HEK293 (cell line): ENCODE measurements at regions of chr6 and their contacts with region 1.

Region 1: GRCh38 chr6:70884074-70884983 is 72.5 kb downstream of the B3GAT2 start:
- H3K4me3 ChIP-seq: no peak overlapping the region
- H3K27ac ChIP-seq: no peak overlapping the region
- H3K4me1 ChIP-seq: no peaks in the 10 kb centered on the region
- CTCF ChIP-seq: peak; percentile 82

Region 2: GRCh38 chr6:70566751-70567382 is 317.5 kb before region 1 on chr6 and contains the start of gene SDHAF4:
- CTCF ChIA-PET with region 1: interaction called, 12 read pairs
- POLR2A ChIA-PET with region 1: no interaction called
- H3K4me3 ChIP-seq: peak within 1 kb of the TSS; percentile 73
- H3K27ac ChIP-seq: peak within 1 kb of the TSS; percentile 83
- H3K4me1 ChIP-seq: no peaks in the 10 kb centered on the region
- CTCF ChIP-seq: peak; percentile 74

Region 3: GRCh38 chr6:70706491-70707123 is 177.7 kb before region 1 on chr6:
- CTCF ChIA-PET with region 1: interaction called, 135 read pairs
- POLR2A ChIA-PET with region 1: no interaction called
- H3K4me3 ChIP-seq: no peak overlapping the region
- H3K27ac ChIP-seq: no peak overlapping the region
- H3K4me1 ChIP-seq: no peaks in the 10 kb centered on the region
- CTCF ChIP-seq: 0 out of 2 replicates have a peak, but pooled peaks have one; percentile 11

Region 4: GRCh38 chr6:70955441-70956190 is 71.3 kb after region 1 on chr6:
- CTCF ChIA-PET with region 1: interaction called, 33 read pairs
- POLR2A ChIA-PET with region 1: no interaction called
- H3K4me3 ChIP-seq: peak overlapping the region; percentile 57
- H3K27ac ChIP-seq: no peak overlapping the region; the same call in 1 of the 2 replicates
- H3K4me1 ChIP-seq: no peaks in the 10 kb centered on the region
- CTCF ChIP-seq: peak; percentile 96